ENCODE measurements at regions of chr14 and their contacts with region 1.

Region 1: DNA sequence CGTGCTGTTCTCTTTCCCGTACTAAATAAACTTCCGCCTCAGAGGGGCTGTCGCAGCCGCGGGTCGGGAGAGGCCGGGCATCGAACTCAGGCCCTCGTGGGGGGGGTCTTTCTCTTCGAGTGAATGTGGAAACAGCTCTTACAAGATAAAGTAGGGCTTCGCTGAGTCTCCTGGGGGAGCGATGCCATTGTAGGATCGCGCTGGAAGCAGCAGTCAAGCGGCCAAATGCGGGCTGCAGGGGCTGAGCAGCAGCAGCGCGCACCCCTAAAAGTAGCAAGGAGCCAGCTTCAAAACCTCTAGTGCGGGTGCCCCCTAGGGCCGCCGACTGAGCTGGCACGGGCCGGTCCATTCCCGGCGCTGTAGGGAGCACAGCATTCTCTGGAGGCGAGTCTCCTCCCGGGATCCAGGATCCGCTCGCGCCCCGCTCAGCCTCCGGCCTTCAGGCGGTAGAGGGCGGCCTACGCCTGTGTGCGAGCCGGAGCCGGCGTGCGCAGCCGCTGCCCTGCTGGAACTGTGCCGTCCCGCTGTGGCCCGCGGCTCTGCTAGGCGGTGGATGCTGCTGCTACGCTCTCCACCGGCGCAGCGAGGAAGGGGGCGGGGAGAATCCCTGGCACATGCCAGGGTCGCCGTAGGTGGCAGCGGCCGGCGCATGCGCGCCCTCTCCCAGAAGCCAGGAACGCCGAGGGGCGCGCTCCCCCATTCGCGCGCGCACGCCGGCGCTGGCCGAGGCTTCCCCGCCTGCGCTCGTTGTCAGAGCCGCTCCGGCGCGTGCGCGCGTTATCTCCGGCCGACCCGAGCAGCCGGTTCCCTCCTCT is at the start of gene FUT8:
- DNase-seq: peak; percentile 98
- H3K4me3 ChIP-seq: peak within 1 kb of the TSS; percentile 76 to 96 (median 85)
- H3K27ac ChIP-seq: peak within 1 kb of the TSS; percentile 61
- H3K4me1 ChIP-seq: peaks cover 18% of the 10 kb centered on the region
- H3K27me3 ChIP-seq: no peaks in the 10 kb centered on the region
- CTCF ChIP-seq: peak; percentile 60 to 80
- POLR2A ChIP-seq: peak; percentile 86
- total RNA-seq, gene FUT8: 27.7 and 38.8 TPM in 2 replicates

Region 2: DNA sequence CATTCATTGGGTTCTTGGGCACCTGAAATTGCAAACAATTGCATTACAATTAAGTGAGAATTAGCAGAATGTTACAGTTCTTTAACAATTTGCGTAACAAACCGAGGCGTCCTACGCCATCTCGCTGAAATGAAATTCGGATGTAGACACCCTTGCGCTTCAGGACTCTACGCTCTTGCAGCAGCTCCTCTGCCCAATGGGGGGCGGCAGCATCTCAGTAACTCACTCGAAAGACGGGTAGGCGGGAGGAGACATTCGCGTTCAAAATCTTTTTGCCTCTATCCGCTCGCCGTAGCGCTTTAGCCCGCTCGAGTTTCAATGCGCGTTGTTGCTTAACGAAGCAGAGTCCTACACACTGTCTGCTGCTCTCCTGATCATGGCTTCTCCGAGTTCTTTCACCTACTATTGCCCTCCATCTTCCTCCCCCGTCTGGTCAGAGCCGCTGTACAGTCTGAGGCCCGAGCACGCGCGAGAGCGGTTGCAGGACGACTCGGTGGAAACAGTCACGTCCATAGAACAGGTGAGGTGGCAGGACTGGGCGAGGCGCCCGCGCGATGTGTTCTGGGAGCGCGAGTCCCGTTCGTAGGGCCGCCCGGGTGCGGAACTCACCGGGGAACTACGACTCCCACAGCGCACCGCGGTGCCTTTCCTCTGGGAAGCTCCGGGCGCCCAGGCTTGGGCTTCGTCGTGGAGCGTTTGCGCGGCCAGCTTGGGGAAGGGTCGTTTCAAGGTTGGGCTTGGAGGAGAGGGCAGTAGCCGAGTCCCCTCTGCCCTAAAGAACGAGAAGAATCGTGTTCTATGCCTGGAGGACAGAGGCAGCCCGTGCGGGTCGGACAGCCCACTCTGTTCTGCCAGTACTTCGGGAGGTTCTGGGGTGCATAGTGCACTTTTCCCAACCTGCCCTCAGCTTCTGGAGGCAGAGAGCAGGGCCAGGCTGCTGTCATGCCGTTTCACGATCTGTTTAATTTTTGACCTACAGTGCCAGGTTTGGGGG is 425.4 kb before region 1 on chr14 and contains the start of gene FNTB:
- CTCF ChIA-PET with region 1: no interaction called
- POLR2A ChIA-PET with region 1: interaction called, 17 read pairs
- dilution Hi-C with region 1: no loop called
- intact Hi-C with region 1: loop called (anchors 2 kb)
- DNase-seq: peak; percentile 98
- H3K4me3 ChIP-seq: peak within 1 kb of the TSS; percentile 40 to 76 (median 63)
- H3K27ac ChIP-seq: peak within 1 kb of the TSS; percentile 32
- H3K4me1 ChIP-seq: peaks cover 15% of the 10 kb centered on the region
- H3K27me3 ChIP-seq: peaks cover 6 to 20% of the 10 kb centered on the region in 2 experiments
- CTCF ChIP-seq: peak; percentile 69 to 85
- POLR2A ChIP-seq: peak; percentile 43
- total RNA-seq, gene FNTB: 21.0 and 24.5 TPM in 2 replicates

Region 3: DNA sequence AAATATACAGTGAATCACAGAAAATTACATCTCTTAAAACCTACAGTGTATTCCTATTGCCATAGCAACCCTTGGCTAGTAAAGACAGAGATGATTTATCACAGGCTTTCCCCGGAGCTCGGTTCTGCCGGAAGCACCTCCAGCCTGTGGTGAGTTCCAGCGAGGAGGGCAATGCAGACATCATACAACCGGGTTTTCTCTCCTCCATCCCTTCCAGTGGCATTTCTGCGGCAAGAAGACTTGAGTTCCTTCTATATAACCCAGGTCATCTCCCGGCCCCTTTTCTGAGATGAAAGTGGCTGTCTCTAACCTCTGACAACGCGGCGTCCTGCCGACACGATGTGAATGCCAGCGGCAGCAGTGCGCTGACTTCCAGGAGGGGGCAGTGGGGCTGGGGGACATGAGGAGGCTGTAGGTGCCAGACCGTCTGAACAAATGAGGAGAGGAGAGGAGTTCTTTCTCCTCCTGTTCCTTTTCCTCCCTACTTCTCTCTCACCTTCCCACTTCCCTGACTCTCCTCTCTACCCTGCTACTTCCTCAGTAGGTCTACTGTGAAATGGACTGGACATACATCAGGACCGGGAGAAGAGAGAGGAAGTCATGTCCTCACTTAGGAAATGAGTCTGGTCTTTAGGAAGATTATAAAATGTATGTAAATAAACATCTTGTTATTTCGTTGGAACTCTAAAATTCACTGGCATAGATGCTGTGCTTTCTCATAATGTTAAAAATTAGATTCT is 241.3 kb before region 1 on chr14:
- CTCF ChIA-PET with region 1: interaction called, 122 read pairs
- POLR2A ChIA-PET with region 1: no interaction called
- dilution Hi-C with region 1: no loop called
- intact Hi-C with region 1: no loop called
- DNase-seq: peak; percentile 70
- H3K4me3 ChIP-seq: peak overlapping the region; percentile 12 to 48 (median 31)
- H3K27ac ChIP-seq: no peak overlapping the region
- H3K4me1 ChIP-seq: peaks cover 10% of the 10 kb centered on the region
- H3K27me3 ChIP-seq: no peaks in the 10 kb centered on the region
- CTCF ChIP-seq: peak; percentile 46 to 57
- POLR2A ChIP-seq: no peak

Region 4: DNA sequence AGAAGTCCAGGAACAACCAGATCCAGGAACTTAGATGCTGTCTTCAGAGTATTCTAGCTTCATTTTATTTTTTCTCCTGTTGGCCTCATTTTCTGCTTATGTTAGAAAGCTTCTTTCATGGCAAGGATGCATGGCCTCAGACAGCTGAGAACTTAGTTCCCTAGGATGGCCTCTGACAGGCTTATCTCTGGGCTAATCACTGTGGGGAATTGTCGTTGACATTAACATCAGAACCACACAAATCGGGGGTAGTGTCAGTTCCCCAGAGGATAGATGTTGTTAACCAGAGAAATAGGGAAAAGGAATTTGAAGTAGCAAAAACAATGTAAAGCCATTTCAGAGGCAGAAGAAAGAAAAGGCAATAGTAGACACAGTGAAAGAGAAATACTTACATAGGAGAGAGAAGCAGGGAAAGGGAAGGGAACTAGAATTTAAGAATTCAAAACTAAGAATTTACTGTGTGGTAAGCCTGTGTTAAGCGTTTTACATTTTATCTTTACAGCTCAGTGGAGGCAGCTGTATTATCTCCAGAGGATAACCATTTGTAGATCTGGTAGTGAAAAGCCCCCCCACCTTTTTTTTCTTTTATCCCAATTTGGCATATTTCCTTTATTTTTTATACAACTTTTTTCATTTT is 22.1 kb after region 1 on chr14:
- CTCF ChIA-PET with region 1: interaction called, 10 read pairs
- POLR2A ChIA-PET with region 1: no interaction called
- dilution Hi-C with region 1: no loop called
- intact Hi-C with region 1: no loop called
- DNase-seq: no peak
- H3K4me3 ChIP-seq: no peak overlapping the region
- H3K27ac ChIP-seq: no peak overlapping the region
- H3K4me1 ChIP-seq: no peaks in the 10 kb centered on the region
- H3K27me3 ChIP-seq: no peaks in the 10 kb centered on the region
- CTCF ChIP-seq: no peak
- POLR2A ChIP-seq: no peak

Region 5: DNA sequence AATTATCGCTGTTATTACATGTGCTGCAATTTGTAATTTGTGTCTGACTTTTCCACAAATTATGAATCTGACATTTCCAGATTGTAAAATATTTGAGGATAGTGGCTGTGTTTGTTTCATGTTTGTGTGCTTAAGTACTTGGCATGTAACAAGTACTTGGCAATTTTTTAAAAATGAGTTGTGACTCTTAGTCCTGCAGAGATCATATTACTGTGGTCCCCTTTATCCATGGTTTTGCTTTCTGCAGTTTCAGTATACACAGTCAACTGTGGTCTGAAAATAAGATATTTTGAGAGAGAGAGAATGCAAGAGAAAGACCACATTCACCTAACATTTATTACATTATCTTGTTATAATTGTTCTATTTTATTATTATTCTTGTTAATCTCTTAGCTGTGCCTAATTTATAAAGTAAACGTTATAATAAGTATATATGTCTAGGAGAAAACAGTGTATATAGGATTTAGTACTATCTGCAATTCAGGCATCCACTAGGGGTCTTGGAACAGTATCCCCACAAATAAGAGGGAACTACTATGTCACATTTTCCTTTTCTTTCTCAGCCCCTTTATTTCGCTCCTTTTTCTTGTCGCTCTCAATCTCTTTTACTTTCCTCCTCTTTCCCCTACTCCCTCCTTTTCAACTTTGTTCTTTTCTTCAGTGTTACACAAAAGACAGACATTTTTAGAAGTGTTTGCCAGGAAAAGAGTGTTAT is 176.3 kb after region 1 on chr14:
- CTCF ChIA-PET with region 1: interaction called, 8 read pairs
- POLR2A ChIA-PET with region 1: no interaction called
- dilution Hi-C with region 1: no loop called
- intact Hi-C with region 1: loop called (anchors 5 kb)
- DNase-seq: no peak
- H3K4me3 ChIP-seq: no peak overlapping the region
- H3K27ac ChIP-seq: no peak overlapping the region
- H3K4me1 ChIP-seq: peaks cover 16% of the 10 kb centered on the region
- H3K27me3 ChIP-seq: no peaks in the 10 kb centered on the region
- CTCF ChIP-seq: no peak
- POLR2A ChIP-seq: no peak

Region 6: GRCh38 chr14:65658202-65658601 is 246.0 kb after region 1 on chr14:
- CTCF ChIA-PET with region 1: no interaction called
- POLR2A ChIA-PET with region 1: no interaction called
- dilution Hi-C with region 1: no loop called
- intact Hi-C with region 1: no loop called
- DNase-seq: no peak
- H3K4me3 ChIP-seq: no peak overlapping the region
- H3K27ac ChIP-seq: no peak overlapping the region
- H3K4me1 ChIP-seq: no peaks in the 10 kb centered on the region
- H3K27me3 ChIP-seq: no peaks in the 10 kb centered on the region
- CTCF ChIP-seq: no peak
- POLR2A ChIP-seq: no peak

Region 7: DNA sequence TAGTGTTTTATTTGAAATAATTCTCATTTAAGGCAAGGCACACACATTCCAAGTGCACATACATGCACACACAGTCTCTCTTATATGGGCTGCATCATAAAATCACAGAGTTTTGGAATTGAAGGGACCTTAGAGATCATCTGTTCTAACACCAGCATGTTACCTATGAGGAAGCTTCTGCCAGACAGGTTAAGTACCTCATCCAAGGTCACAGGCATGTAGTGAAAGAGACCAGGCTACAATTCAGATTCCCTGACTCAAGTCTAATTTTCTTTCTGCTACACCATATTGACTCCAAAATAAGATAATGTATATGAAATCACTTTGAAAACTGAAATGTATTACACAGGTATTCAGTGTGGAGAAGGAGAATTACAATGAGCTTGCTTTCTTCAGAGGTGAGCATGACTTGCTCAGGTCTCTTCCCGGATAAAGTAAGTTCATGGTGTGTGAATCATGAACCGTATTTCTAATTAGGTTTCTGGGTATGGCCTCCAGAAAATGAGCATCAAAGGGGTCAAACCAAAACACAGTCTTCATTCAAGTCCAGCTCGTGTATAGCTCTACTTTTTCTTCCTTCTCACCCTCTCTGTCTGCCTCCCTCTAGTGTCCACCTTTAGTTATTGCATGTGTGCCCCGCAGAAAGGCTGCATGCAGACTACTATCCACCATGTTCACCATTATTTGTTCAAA is 412.2 kb after region 1 on chr14:
- CTCF ChIA-PET with region 1: interaction called, 926 read pairs
- POLR2A ChIA-PET with region 1: interaction called, 5 read pairs
- dilution Hi-C with region 1: no loop called
- intact Hi-C with region 1: loop called (anchors 1 kb)
- DNase-seq: peak; percentile 75
- H3K4me3 ChIP-seq: no peak overlapping the region
- H3K27ac ChIP-seq: no peak overlapping the region
- H3K4me1 ChIP-seq: no peaks in the 10 kb centered on the region
- H3K27me3 ChIP-seq: peaks cover 15 to 18% of the 10 kb centered on the region in 2 experiments
- CTCF ChIP-seq: peak; percentile 83 to 86
- POLR2A ChIP-seq: no peak

Measured in endothelial cell of umbilical vein (primary cell).